MCF 10A (cell line): ENCODE measurements at regions of chr7 and their contacts with region 1.

Region 1: GRCh38 chr7:836411-837400 is 4.4 kb downstream of the SUN1 start:
- DNase-seq: peak; percentile 75
- H3K4me3 Mint-ChIP-seq: peak overlapping the region; percentile 28
- H3K27ac Mint-ChIP-seq: peak overlapping the region; percentile 100
- H3K4me1 Mint-ChIP-seq: peaks cover 31% of the 10 kb centered on the region
- H3K27me3 Mint-ChIP-seq: no peaks in the 10 kb centered on the region
- CTCF ChIP-seq: peak; percentile 46

Region 2: GRCh38 chr7:867672-868486 is 31.2 kb after region 1 on chr7:
- CTCF ChIA-PET with region 1: interaction called, 39 read pairs
- POLR2A ChIA-PET with region 1: interaction called, 31 read pairs
- intact Hi-C with region 1: loop called (anchors 1 kb)
- DNase-seq: peak; percentile 78
- H3K4me3 Mint-ChIP-seq: peak overlapping the region; percentile 22
- H3K27ac Mint-ChIP-seq: peak overlapping the region; percentile 89
- H3K4me1 Mint-ChIP-seq: peaks cover 7% of the 10 kb centered on the region
- H3K27me3 Mint-ChIP-seq: no peaks in the 10 kb centered on the region
- CTCF ChIP-seq: no peak